Naive thymus-derived CD4-positive, alpha-beta T cell (primary cell): ENCODE measurements at regions of chr2 and their contacts with region 1.

Region 1: GRCh38 chr2:149744865-149745264 is 157.3 kb upstream of the MMADHC start:
- DNase-seq: no peak
- ATAC-seq: no peak
- H3K4me3 ChIP-seq: no peak overlapping the region
- H3K4me3 Mint-ChIP-seq: no peak overlapping the region
- H3K27ac ChIP-seq: no peak overlapping the region
- H3K27ac Mint-ChIP-seq: no peak overlapping the region
- H3K4me1 ChIP-seq: no peaks in the 10 kb centered on the region
- H3K4me1 Mint-ChIP-seq: no peaks in the 10 kb centered on the region
- H3K27me3 ChIP-seq: no peaks in the 10 kb centered on the region
- H3K27me3 Mint-ChIP-seq: peaks cover 0 to 9% (median 0%) of the 10 kb centered on the region in 5 donors

Region 2: DNA sequence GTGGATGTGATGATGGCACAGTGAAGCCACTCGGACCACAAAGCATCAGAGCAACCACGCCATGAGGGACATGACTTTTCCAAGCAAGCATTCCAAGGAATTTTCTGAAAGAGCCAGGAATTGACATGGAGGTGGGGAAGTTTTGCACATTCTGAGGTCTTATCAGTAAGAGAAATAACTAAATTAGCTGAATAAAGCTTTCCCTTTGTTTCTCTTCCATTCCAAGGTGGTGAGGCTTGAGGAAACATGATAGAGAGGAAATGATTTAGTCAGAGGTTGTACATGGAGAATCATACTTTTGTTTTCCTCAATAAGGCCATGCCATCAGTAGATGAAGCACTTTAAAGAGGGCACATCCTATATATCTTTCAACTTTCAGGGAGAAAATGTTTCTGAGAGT is 41.6 kb before region 1 on chr2:
- CTCF ChIA-PET with region 1: no interaction called
- POLR2A ChIA-PET with region 1: no interaction called
- intact Hi-C with region 1: no loop called
- DNase-seq: no peak
- ATAC-seq: no peak
- H3K4me3 ChIP-seq: no peak overlapping the region
- H3K4me3 Mint-ChIP-seq: no peak overlapping the region
- H3K27ac ChIP-seq: no peak overlapping the region
- H3K27ac Mint-ChIP-seq: no peak overlapping the region
- H3K4me1 ChIP-seq: no peaks in the 10 kb centered on the region
- H3K4me1 Mint-ChIP-seq: no peaks in the 10 kb centered on the region
- H3K27me3 ChIP-seq: no peaks in the 10 kb centered on the region
- H3K27me3 Mint-ChIP-seq: peaks cover 0 to 11% (median 5%) of the 10 kb centered on the region in 5 donors

Region 3: DNA sequence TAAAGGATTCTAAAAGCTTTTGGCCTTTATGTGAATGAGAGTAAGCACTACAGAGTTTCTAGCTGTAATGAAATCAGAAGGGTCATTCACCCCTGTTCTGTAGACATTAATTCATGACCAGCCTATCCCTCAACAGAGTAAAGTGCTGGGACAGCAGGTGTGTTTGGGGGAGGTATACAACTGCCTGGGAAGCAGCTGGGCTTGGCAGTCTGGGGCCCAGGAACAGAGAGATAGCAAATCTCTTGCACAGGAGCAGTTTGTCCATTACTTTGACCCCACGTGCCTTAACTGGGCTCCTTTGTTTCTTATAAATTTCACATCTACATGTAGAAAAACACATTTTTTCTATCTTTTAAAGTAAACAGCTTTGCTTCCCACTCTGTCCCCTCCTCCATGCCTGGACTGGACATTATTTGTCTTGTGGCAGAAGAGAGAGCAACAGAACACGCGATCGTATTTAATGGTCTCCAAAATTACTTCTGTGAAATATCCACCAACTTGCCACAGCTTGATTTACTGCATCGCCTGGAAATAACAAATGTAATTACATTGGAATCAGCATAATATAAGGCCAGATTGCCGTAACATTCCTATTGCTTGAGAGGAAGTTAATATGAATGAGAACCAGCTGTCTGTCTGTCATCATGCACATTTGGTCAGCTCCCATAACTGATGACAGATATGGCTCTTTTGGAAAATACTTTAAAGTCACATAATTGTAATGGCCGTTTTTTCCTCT is 1253.0 kb after region 1 on chr2:
- CTCF ChIA-PET with region 1: no interaction called
- POLR2A ChIA-PET with region 1: no interaction called
- intact Hi-C with region 1: loop called in 1 of 2 experiments (anchors 10 kb)
- DNase-seq: no peak
- ATAC-seq: no peak
- H3K4me3 ChIP-seq: no peak overlapping the region
- H3K4me3 Mint-ChIP-seq: no peak overlapping the region
- H3K27ac ChIP-seq: no peak overlapping the region
- H3K27ac Mint-ChIP-seq: no peak overlapping the region
- H3K4me1 ChIP-seq: no peaks in the 10 kb centered on the region
- H3K4me1 Mint-ChIP-seq: no peaks in the 10 kb centered on the region
- H3K27me3 ChIP-seq: no peaks in the 10 kb centered on the region
- H3K27me3 Mint-ChIP-seq: peaks cover 0 to 7% (median 4%) of the 10 kb centered on the region in 5 donors